Activated CD4-positive, alpha-beta memory T cell treated with anti-CD3 and anti-CD28 coated beads for 36 hours (primary cell): ENCODE measurements at regions of chr2 and their contacts with region 1.

Region 1: DNA sequence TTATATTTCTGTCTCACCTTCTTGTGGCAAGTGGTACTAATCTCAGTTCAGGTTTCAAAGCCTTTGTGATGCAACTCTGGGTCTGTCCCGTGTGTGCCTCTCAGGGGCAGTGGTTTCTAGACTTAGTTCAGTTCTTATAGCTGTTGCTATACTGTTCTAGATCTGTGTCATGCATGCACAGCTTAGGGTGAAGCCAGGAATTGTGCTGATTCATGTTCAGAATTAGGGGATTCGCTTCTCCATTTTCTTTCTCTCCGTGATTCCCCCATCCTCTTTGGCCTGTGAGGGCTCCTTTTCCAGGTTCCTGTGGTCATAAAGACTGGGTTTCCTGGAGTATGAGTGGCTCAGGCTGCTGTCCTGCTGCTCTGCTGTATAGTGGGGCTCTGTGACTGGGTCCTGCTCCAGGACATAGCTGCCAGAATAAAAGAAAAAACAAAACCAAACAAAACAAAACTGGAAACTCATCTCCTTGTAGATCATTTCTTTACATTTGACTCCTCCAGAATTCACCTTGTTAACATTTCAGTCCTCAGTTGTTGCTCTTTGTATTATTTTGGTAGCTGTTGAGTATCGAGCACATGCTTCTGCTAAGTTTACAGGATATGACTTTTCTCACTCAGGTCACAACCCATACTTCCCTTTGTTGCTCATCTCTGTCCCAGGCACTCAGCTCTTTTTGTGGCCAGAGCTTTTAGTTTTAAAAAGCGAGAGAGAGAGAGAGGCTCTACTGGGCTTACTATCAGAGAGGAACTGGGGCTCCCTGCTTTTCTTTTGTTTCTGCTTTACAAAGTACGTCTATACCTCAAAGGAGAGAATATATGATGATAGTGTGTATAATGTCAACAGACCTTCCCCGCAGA is 34.2 kb downstream of the CERS6 start:
- DNase-seq: peak; percentile 78
- H3K4me3 Mint-ChIP-seq: peak overlapping the region; percentile 65
- H3K27ac Mint-ChIP-seq: peak overlapping the region; percentile 89
- H3K4me1 Mint-ChIP-seq: peaks cover 40% of the 10 kb centered on the region
- H3K27me3 Mint-ChIP-seq: peaks cover 7% of the 10 kb centered on the region

Region 2: GRCh38 chr2:168030862-168031624 is 459.2 kb before region 1 on chr2:
- CTCF ChIA-PET with region 1: no interaction called
- POLR2A ChIA-PET with region 1: no interaction called
- intact Hi-C with region 1: loop called (anchors 10 kb)
- DNase-seq: peak; percentile 50
- H3K4me3 Mint-ChIP-seq: no peak overlapping the region
- H3K27ac Mint-ChIP-seq: peak overlapping the region; percentile 49
- H3K4me1 Mint-ChIP-seq: peaks cover 19% of the 10 kb centered on the region
- H3K27me3 Mint-ChIP-seq: no peaks in the 10 kb centered on the region

Region 3: GRCh38 chr2:168246483-168247340 is 243.5 kb before region 1 on chr2:
- CTCF ChIA-PET with region 1: no interaction called
- POLR2A ChIA-PET with region 1: no interaction called
- intact Hi-C with region 1: loop called (anchors 2 kb)
- DNase-seq: peak; percentile 83
- H3K4me3 Mint-ChIP-seq: peak overlapping the region; percentile 93
- H3K27ac Mint-ChIP-seq: peak overlapping the region; percentile 89
- H3K4me1 Mint-ChIP-seq: peaks cover 38% of the 10 kb centered on the region
- H3K27me3 Mint-ChIP-seq: no peaks in the 10 kb centered on the region

Region 4: GRCh38 chr2:168455648-168456520 is 34.4 kb before region 1 on chr2 and contains the start of gene CERS6:
- CTCF ChIA-PET with region 1: no interaction called
- POLR2A ChIA-PET with region 1: interaction called, 8 read pairs
- intact Hi-C with region 1: loop called (anchors 1 kb)
- DNase-seq: peak; percentile 93
- H3K4me3 Mint-ChIP-seq: no peak within 1 kb of the TSS
- H3K27ac Mint-ChIP-seq: peak within 1 kb of the TSS; percentile 31
- H3K4me1 Mint-ChIP-seq: peaks cover 28% of the 10 kb centered on the region
- H3K27me3 Mint-ChIP-seq: no peaks in the 10 kb centered on the region
- total RNA-seq, gene CERS6: 8.9 to 9.2 TPM

Region 5: DNA sequence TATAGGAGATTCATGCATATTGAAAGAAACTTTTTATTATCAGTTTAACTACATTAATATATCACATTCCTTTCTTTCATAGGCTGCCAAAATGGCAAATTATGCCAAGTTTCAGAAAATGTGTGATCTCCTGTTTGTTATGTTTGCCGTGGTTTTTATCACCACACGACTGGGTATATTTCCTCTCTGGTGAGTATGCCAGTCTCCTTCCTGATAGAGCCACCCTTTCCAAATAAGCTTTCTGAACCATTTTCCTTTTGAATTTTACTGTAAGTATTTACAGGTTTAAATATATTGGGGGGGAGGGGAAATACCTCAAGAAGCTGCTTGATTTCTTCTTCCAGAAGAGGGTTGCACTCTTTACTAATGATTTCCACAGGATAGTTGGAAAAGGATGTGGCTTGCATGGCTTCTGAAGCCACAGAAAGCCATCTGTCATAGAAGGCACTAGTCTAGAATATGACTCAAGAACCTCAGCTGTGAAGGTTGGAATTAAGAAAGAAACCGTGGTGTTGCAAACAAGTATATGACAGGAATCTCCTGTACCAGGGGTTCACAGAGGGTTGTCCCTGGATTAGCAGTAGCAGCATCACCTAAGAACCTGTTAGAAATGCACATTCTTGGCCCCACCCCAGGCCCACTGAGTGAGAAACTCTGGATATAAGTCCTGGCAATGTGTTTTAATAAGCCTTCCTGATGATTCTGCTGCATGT is 227.7 kb after region 1 on chr2:
- CTCF ChIA-PET with region 1: no interaction called
- POLR2A ChIA-PET with region 1: no interaction called
- intact Hi-C with region 1: loop called (anchors 1 kb)
- DNase-seq: peak; percentile 29
- H3K4me3 Mint-ChIP-seq: no peak overlapping the region
- H3K27ac Mint-ChIP-seq: no peak overlapping the region
- H3K4me1 Mint-ChIP-seq: peaks cover 21% of the 10 kb centered on the region
- H3K27me3 Mint-ChIP-seq: no peaks in the 10 kb centered on the region

Region 6: GRCh38 chr2:168920504-168921157 is 430.4 kb after region 1 on chr2:
- CTCF ChIA-PET with region 1: interaction called, 3 read pairs
- POLR2A ChIA-PET with region 1: no interaction called
- intact Hi-C with region 1: loop called (anchors 1 kb)
- DNase-seq: no peak
- H3K4me3 Mint-ChIP-seq: no peak overlapping the region
- H3K27ac Mint-ChIP-seq: no peak overlapping the region
- H3K4me1 Mint-ChIP-seq: peaks cover 8% of the 10 kb centered on the region
- H3K27me3 Mint-ChIP-seq: peaks cover 19% of the 10 kb centered on the region

Region 7: DNA sequence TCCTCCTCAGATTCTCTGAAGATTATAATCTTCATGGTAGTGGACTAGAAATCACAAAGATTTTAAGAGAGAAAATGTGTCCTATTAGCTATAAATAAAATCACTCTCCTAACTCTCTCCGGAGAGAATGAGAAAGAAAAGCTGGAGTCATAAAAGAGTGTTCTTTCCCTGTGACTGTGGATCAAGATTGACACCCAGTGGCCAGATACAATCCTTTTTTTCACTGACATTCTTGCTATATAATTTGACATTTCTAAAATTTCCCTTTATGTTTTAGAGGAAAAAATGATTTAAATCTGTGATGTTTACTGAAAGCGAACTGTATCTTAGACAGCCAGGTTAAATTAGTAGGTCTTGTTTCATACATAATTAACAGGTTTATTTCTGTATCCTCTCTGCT is 907.5 kb after region 1 on chr2:
- CTCF ChIA-PET with region 1: no interaction called
- POLR2A ChIA-PET with region 1: no interaction called
- intact Hi-C with region 1: no loop called
- DNase-seq: no peak
- H3K4me3 Mint-ChIP-seq: no peak overlapping the region
- H3K27ac Mint-ChIP-seq: no peak overlapping the region
- H3K4me1 Mint-ChIP-seq: no peaks in the 10 kb centered on the region
- H3K27me3 Mint-ChIP-seq: peaks cover 21% of the 10 kb centered on the region